Heart right ventricle (tissue), 16 donors: ENCODE measurements at regions of chr11 and their contacts with region 1.

Region 1: DNA sequence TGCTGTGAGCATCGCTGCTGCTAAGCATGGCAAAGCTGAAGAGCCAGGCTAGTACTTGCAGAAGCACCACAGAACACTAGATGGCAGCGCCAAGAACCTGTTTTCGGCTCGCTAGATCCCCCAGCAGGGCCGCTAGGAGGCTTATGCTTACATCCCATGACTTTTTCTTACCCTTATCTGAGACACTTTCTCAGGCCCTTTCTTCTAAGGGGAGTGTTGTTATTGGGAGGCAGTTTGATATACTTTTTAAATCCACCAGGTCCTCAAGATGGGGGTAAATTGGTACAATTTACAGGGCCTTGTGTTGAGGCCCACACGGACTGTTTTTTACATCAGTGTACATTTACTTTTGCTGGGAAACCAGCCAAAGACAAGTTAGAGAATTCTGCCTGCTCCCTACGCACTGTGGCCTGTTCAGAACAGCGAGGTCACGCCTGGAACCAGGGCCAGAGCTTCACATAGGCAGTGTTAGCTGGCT is 4.0 kb downstream of the TRIM6 start:
- DNase-seq: peak; percentile 50 to 63
- ATAC-seq: peak; percentile 69 to 85 (median 80)
- H3K4me3 ChIP-seq: no peak overlapping the region
- H3K27ac ChIP-seq: peak overlapping the region in 3 of 10 donors; percentile 27 to 56 (median 38)
- H3K4me1 ChIP-seq: peaks cover 6 to 23% (median 13%) of the 10 kb centered on the region in 9 donors
- H3K27me3 ChIP-seq: no peaks in the 10 kb centered on the region
- CTCF ChIP-seq: peak; percentile 29 to 85 (median 76)

Region 2: GRCh38 chr11:4393209-4393857 is 1207.1 kb before region 1 on chr11 and contains the start of gene TRIM21:
- intact Hi-C with region 1: loop called in 1 of 10 experiments (anchors 5 kb)
- DNase-seq: peak; percentile 78 to 90
- ATAC-seq: peak; percentile 98 to 100 (median 99)
- H3K4me3 ChIP-seq: peak within 1 kb of the TSS; percentile 64 to 99 (median 87)
- H3K27ac ChIP-seq: peak within 1 kb of the TSS; percentile 65 to 98 (median 86)
- H3K4me1 ChIP-seq: peaks cover 0 to 24% (median 12%) of the 10 kb centered on the region in 9 donors
- H3K27me3 ChIP-seq: peaks cover 0 to 7% (median 0%) of the 10 kb centered on the region in 7 donors
- CTCF ChIP-seq: no peak
- total RNA-seq, gene TRIM21: 4.4 to 36.8 (median 7.4) TPM

Region 3: GRCh38 chr11:5460983-5461621 is 139.3 kb before region 1 on chr11:
- intact Hi-C with region 1: no loop called
- DNase-seq: no peak
- ATAC-seq: peak in 1 of 8 donors; percentile 34
- H3K4me3 ChIP-seq: no peak overlapping the region
- H3K27ac ChIP-seq: no peak overlapping the region
- H3K4me1 ChIP-seq: no peaks in the 10 kb centered on the region
- H3K27me3 ChIP-seq: no peaks in the 10 kb centered on the region
- CTCF ChIP-seq: no peak

Region 4: DNA sequence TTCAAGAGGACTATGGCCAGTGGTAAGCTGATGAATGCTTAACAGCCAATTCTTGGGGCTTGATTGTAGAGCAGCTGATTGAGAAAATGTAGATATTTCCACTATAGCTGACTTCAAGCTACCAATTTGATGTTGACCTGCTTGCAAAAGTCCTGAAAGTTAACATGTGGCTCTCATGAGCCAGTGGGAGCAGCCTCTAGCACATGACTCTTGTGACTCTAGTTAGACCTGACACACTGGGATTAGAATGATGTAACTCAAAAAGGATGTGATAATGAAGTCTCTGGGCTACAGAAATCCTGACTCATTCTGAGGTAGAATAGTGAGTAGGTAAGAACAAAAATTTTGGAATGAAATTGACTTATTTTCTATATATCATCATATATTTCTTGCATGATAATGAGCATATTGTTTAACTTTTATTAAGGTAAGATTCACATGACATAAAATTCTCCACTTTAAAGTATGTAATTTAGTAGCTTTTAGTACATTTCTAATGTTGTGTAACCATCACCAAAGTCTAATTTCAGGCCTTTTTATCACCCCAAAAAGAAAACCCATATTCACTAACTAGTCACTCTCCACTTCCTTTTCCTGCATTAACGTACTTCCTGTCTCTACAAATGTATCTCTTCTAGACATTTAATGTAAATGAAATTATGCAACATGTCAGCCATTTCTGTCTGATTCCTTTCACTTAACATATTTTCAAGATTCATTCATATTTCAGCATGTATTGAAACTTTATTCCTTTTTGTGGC is 36.0 kb before region 1 on chr11:
- intact Hi-C with region 1: no loop called
- DNase-seq: no peak
- ATAC-seq: no peak
- H3K4me3 ChIP-seq: no peak overlapping the region
- H3K27ac ChIP-seq: no peak overlapping the region
- H3K4me1 ChIP-seq: no peaks in the 10 kb centered on the region
- H3K27me3 ChIP-seq: no peaks in the 10 kb centered on the region
- CTCF ChIP-seq: no peak

Region 5: GRCh38 chr11:5967708-5968107 is 367.3 kb after region 1 on chr11:
- intact Hi-C with region 1: no loop called
- DNase-seq: no peak
- ATAC-seq: no peak
- H3K4me3 ChIP-seq: no peak overlapping the region
- H3K27ac ChIP-seq: no peak overlapping the region
- H3K4me1 ChIP-seq: no peaks in the 10 kb centered on the region
- H3K27me3 ChIP-seq: peaks cover 0 to 2% (median 0%) of the 10 kb centered on the region in 7 donors
- CTCF ChIP-seq: no peak